HepG2 (cell line): ENCODE measurements at regions of chr2 and their contacts with region 1.

Region 1: GRCh38 chr2:43219383-43220228 is 6.8 kb downstream of the ZFP36L2 start:
- DNase-seq: peak; percentile 87
- ATAC-seq: peak; percentile 58
- H3K4me3 ChIP-seq: peak overlapping the region; percentile 80 to 97 (median 89)
- H3K27ac ChIP-seq: peak overlapping the region; percentile 89
- H3K4me1 ChIP-seq: peaks cover 53% of the 10 kb centered on the region
- H3K27me3 ChIP-seq: no peaks in the 10 kb centered on the region; a peak in 1 of 5 replicates
- CTCF ChIP-seq: peak; percentile 22
- EP300 ChIP-seq: 0 out of 4 replicates have a peak, but pooled peaks of 1 of the 2 experiments have one; percentile 34
- POLR2A ChIP-seq: peak in 1 of 2 experiments; percentile 74; a peak in 2 of 4 replicates
- RAD21 ChIP-seq: no peak

Region 2: DNA sequence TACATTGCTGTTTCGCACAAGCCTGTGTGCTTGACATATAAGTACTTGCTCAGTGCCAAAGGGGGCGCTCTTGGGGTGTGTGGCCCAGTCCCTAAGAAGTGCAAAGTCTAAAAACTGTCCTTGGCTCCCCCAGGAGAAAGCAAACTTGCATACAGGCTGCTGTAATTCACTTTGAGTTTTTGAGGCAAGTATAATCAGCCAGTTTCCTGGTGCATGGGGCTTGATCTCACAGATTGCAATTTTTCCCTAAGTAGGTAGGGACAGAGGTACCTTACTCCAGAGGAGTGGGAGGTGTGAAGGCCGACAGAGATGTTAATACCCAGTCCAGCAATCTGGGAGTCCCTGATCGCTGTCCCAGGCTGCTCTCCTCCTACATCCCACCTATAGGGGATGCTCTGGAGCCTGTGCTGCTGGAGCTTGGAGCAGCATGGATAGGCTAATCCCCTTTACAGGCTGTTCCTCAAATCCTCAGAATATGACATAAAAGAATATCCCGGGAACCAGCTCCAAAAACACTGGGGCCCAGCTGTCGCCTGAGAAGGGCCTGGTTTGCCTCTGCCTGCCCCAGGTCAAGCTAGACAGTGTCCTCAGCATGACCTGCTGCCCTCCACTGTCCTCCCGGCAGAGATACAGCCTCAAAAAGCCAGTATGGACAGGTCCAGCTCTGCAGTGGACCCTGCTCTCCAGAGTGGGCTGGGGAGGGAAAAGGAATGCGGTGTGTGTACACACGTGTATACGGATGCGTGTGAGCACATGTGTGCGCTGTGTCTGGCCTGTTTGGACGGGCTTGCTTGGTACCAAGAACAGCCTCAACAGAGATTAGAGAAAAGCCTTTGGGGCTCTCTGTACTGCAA is 290.7 kb before region 1 on chr2:
- CTCF ChIA-PET with region 1: no interaction called
- POLR2A ChIA-PET with region 1: interaction called, 37 read pairs
- in situ Hi-C with region 1: no loop called
- intact Hi-C with region 1: no loop called
- DNase-seq: peak; percentile 90
- ATAC-seq: peak; percentile 54
- H3K4me3 ChIP-seq: peak overlapping the region; percentile 52 to 74 (median 62)
- H3K27ac ChIP-seq: peak overlapping the region; percentile 88
- H3K4me1 ChIP-seq: peaks cover 98% of the 10 kb centered on the region
- H3K27me3 ChIP-seq: no peaks in the 10 kb centered on the region
- CTCF ChIP-seq: peak; percentile 78
- EP300 ChIP-seq: peak in 1 of 2 experiments; percentile 70; a peak in 1 of 4 replicates
- POLR2A ChIP-seq: no peak
- RAD21 ChIP-seq: no peak

Region 3: DNA sequence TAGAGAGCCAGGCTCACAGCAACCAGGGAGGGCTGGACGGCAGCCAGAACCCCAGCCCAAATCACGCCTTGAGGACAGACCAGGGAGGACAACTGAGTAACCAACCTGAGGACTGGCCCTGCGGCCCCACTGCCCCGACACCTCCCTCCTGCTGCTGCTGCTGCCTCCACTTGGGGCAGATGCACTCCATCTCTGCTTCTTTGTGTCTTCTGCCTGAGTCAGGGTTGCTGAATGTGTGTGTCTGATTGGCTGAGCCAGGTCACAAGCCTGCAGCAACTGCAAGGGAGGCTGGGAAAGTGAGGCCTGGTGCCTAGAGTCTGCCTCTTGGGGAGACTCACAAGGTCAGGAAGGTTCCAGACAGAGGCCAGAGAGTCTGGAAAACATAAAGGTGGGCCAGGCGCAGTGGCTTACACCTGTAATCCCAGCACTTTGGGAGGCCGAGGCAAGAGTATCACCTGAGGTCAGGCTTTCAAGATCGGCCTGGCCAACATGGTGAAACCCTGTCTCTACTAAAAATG is 76.6 kb before region 1 on chr2:
- CTCF ChIA-PET with region 1: no interaction called
- POLR2A ChIA-PET with region 1: interaction called, 14 read pairs
- in situ Hi-C with region 1: no loop called
- intact Hi-C with region 1: no loop called
- DNase-seq: peak; percentile 78
- ATAC-seq: peak; percentile 86
- H3K4me3 ChIP-seq: no peak overlapping the region
- H3K27ac ChIP-seq: peak overlapping the region; percentile 0
- H3K4me1 ChIP-seq: peaks cover 62% of the 10 kb centered on the region
- H3K27me3 ChIP-seq: no peaks in the 10 kb centered on the region
- CTCF ChIP-seq: peak; percentile 70
- EP300 ChIP-seq: no peak
- POLR2A ChIP-seq: no peak
- RAD21 ChIP-seq: peak; percentile 75

Region 4: DNA sequence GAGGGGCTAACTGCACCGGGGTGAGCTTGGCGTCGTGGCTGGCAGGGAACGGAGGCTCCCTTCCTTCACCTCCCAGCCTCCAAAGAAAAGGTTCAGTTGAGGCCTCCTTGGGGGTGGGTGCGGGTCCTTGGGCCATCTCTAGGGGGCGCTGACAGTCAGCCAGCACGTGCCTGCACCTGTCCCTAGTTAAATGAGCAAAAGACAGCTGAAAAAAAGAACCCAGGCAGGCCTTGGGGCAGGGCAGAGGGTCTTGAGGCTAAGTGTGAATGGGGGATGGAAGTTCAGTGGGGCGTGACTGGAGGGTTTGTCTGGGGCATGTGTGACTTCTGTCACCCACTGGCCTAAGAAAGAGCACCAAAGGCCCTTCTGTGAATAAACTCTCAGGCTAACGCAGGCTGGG is 49.6 kb before region 1 on chr2:
- CTCF ChIA-PET with region 1: interaction called, 6 read pairs
- POLR2A ChIA-PET with region 1: interaction called, 50 read pairs
- in situ Hi-C with region 1: loop called (anchors 10 kb)
- intact Hi-C with region 1: loop called (anchors 1 kb)
- DNase-seq: no peak
- ATAC-seq: peak; percentile 40
- H3K4me3 ChIP-seq: no peak overlapping the region
- H3K27ac ChIP-seq: no peak overlapping the region
- H3K4me1 ChIP-seq: peaks cover 72% of the 10 kb centered on the region
- H3K27me3 ChIP-seq: no peaks in the 10 kb centered on the region
- CTCF ChIP-seq: peak; percentile 85
- EP300 ChIP-seq: no peak
- POLR2A ChIP-seq: no peak
- RAD21 ChIP-seq: peak; percentile 61

Region 5: GRCh38 chr2:43184339-43184895 is 35.2 kb before region 1 on chr2:
- CTCF ChIA-PET with region 1: no interaction called
- POLR2A ChIA-PET with region 1: interaction called, 79 read pairs
- in situ Hi-C with region 1: no loop called
- intact Hi-C with region 1: no loop called
- DNase-seq: peak; percentile 94
- ATAC-seq: peak; percentile 84
- H3K4me3 ChIP-seq: peak overlapping the region in 1 of 3 experiments; percentile 26; a peak in 1 of 6 replicates
- H3K27ac ChIP-seq: peak overlapping the region; percentile 42
- H3K4me1 ChIP-seq: peaks cover 82% of the 10 kb centered on the region
- H3K27me3 ChIP-seq: no peaks in the 10 kb centered on the region
- CTCF ChIP-seq: peak; percentile 62
- EP300 ChIP-seq: peak; percentile 19 to 82; a peak in 2 of 4 replicates
- POLR2A ChIP-seq: no peak
- RAD21 ChIP-seq: no peak

Region 6: DNA sequence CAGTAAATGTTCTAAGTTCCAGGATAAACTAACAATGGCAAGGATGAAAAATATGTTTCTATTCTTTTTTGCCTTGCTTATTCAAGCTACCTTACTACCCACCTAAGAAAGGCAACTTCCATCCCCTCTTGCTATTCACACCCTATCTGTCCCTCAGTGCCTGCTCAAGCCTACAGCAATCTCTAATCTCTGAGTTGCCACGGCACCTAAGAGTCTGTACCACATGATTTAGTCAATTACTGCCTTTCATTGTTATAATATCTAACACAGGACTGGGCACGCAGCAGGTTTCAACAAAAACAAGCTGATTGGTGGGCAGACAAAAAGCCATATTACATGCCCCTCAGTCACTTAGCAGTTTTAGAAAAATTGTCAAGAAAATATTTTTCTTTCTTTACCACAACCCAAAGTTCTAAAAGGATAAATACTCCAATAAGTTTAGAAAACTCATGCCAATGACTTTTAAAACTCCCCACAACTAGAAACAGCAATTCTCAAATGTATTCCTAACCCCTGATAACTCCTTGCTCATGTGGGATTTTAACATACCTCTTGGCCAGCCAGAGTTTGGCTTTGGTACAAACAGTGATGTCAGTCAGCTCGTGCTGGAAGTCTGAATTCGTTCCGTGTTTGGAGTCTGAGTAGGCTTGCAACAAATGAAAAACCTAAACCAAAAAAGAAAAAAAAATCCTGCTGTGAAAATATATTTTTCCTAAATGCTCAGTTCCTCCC is 124.1 kb after region 1 on chr2:
- CTCF ChIA-PET with region 1: no interaction called
- POLR2A ChIA-PET with region 1: no interaction called
- in situ Hi-C with region 1: no loop called
- intact Hi-C with region 1: no loop called
- DNase-seq: no peak
- ATAC-seq: no peak
- H3K4me3 ChIP-seq: no peak overlapping the region
- H3K27ac ChIP-seq: no peak overlapping the region
- H3K4me1 ChIP-seq: peaks cover 24% of the 10 kb centered on the region
- H3K27me3 ChIP-seq: no peaks in the 10 kb centered on the region
- CTCF ChIP-seq: no peak
- EP300 ChIP-seq: no peak
- POLR2A ChIP-seq: no peak
- RAD21 ChIP-seq: no peak

Region 7: DNA sequence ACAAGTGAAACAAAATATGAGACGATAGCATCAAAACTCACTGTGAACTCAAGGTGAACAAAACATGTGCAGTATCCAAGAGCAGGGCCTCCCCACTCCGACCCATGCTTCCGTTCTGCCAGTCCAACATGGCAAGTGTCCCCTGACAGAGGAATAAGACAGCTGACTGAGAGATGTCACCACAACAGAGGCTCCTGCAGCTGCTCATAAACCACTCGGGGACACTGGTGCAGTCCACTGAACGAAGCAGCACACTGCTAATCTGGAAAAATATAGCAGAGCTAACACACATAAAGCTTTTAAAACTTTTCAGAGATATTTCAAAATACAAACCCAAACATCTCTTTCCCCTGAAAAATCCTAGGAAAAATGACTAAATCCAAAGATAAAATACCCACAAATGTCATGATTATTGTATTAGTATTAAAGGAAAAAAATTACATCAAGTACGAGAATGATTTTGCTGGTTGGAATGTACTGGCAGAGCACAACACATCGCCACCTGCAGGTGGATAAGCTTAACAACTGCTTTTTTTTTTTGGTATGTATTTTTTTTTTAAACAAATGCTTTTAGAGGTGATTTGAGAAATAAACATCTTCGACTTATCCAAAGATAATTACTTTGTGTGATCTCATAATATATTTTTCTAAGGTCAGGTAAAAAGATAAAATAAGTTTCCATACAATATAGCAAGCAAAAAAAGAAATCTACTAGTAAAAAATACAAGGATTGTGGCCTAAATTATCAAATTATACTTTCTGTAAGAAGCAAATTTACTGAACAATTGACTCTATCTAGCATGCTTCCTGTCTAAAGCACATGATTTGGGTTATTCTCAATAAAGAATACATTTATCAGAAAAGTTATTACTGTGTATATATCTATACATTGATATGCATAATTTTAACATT is 357.6 kb after region 1 on chr2:
- CTCF ChIA-PET with region 1: no interaction called
- POLR2A ChIA-PET with region 1: no interaction called
- in situ Hi-C with region 1: no loop called
- intact Hi-C with region 1: no loop called
- DNase-seq: peak; percentile 63
- ATAC-seq: 0 out of 3 replicates have a peak, but pooled peaks have one; percentile 33
- H3K4me3 ChIP-seq: no peak overlapping the region
- H3K27ac ChIP-seq: no peak overlapping the region
- H3K4me1 ChIP-seq: no peaks in the 10 kb centered on the region
- H3K27me3 ChIP-seq: no peaks in the 10 kb centered on the region
- CTCF ChIP-seq: peak; percentile 68
- EP300 ChIP-seq: no peak
- POLR2A ChIP-seq: no peak
- RAD21 ChIP-seq: 0 out of 2 replicates have a peak, but pooled peaks have one; percentile 14